ENCODE measurements at regions of chr6 and their contacts with region 1.

Region 1: GRCh38 chr6:154352898-154353585 is 3.6 kb downstream of the IPCEF1 start:
- DNase-seq: no peak
- H3K4me3 Mint-ChIP-seq: no peak overlapping the region
- H3K27ac Mint-ChIP-seq: no peak overlapping the region
- H3K4me1 Mint-ChIP-seq: peaks cover 20% of the 10 kb centered on the region
- H3K27me3 Mint-ChIP-seq: peaks cover 19% of the 10 kb centered on the region

Region 2: GRCh38 chr6:154229786-154230185 is 123.3 kb before region 1 on chr6:
- intact Hi-C with region 1: loop called (anchors 1 kb)
- DNase-seq: peak; percentile 49
- H3K4me3 Mint-ChIP-seq: peak overlapping the region; percentile 46
- H3K27ac Mint-ChIP-seq: peak overlapping the region; percentile 47
- H3K4me1 Mint-ChIP-seq: peaks cover 57% of the 10 kb centered on the region
- H3K27me3 Mint-ChIP-seq: no peaks in the 10 kb centered on the region

Region 3: GRCh38 chr6:154276810-154277628 is 76.0 kb before region 1 on chr6:
- intact Hi-C with region 1: loop called (anchors 1 kb)
- DNase-seq: no peak
- H3K4me3 Mint-ChIP-seq: peak overlapping the region; percentile 65
- H3K27ac Mint-ChIP-seq: peak overlapping the region; percentile 74
- H3K4me1 Mint-ChIP-seq: peaks cover 23% of the 10 kb centered on the region
- H3K27me3 Mint-ChIP-seq: peaks cover 18% of the 10 kb centered on the region

Region 4: DNA sequence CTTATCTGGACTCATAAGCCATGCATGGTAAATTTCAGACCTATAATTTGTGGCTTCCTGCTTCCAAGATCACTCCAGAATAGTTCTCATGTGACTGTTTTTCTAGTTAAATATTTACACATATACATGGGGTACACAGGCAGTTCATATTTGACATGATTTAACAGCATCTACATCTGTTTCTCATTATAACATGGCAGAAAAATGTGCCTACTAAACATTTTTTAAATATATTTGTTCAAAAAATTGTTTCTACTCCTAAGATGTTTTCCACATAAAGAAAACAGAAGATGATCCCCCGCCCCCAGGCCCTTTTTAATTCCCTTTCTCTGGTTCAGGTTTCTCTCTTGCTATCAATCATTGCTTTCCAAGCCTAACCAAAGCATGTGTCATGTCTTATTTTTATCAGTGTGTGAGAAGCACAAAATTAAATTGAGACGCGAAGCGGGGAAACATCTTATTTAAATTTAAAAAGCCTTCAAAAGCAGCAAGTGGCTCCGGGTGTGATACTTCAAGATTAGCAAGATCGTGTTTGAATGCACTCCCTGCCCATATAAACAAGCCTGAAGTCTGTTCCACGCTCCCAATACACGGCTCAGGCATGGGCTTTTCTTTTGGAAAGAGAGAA is 33.7 kb before region 1 on chr6:
- intact Hi-C with region 1: loop called (anchors 5 kb)
- DNase-seq: no peak
- H3K4me3 Mint-ChIP-seq: no peak overlapping the region
- H3K27ac Mint-ChIP-seq: no peak overlapping the region
- H3K4me1 Mint-ChIP-seq: peaks cover 5% of the 10 kb centered on the region
- H3K27me3 Mint-ChIP-seq: peaks cover 13% of the 10 kb centered on the region

Region 5: DNA sequence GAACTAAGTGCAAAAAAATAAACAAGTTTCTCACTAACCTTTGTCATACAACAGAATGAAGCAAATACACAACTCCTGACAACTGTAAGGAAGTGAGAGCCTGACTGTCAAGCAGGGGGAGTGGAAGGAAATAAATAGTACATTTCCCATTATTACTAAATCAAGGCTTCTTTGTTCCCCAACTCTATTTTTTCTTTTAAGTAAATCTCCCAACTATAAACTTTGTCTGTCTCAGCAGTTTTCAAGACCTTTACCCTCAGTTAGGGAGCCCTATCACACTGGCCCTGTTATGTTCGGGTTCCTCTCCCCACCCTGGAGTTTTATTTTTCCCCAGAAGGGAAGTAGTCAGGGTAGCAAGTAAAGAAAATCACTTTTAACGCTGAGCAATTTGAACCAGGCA is 27.7 kb after region 1 on chr6:
- intact Hi-C with region 1: no loop called
- DNase-seq: no peak
- H3K4me3 Mint-ChIP-seq: no peak overlapping the region
- H3K27ac Mint-ChIP-seq: no peak overlapping the region
- H3K4me1 Mint-ChIP-seq: no peaks in the 10 kb centered on the region
- H3K27me3 Mint-ChIP-seq: no peaks in the 10 kb centered on the region

Region 6: DNA sequence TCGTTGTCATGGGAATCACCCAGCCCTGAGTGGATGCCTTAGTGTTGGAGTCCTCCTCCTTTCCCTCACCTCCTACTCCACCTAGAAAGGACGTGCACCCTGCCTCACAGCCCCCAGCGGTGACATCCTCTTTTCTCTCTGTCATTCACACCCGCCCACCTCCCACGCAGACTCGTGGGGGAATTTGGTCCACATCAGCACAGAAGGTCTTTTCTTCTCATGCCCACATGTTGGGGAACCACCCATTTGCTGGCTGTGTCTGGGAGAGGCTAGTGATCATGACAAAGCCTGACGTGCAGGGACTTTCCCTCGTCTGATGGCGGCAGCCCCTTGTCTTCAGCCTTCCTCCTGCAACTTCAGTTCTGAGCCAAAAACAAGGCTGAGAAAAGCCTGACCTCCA is 253.4 kb after region 1 on chr6:
- intact Hi-C with region 1: loop called (anchors 1 kb)
- DNase-seq: peak; percentile 66
- H3K4me3 Mint-ChIP-seq: peak overlapping the region; percentile 65
- H3K27ac Mint-ChIP-seq: peak overlapping the region; percentile 86
- H3K4me1 Mint-ChIP-seq: peaks cover 24% of the 10 kb centered on the region
- H3K27me3 Mint-ChIP-seq: peaks cover 3% of the 10 kb centered on the region

Measured in activated T-helper 1 cell treated with anti-CD3 and anti-CD28 coated beads, Interleukin-12 subunit alpha, Interleukin-12 subunit beta, Interleukin-2, Interleukin-4 antibody, amounts not matched to agents 30 ng/mL and 10 ng/mL and 1 ng/mL, durations not matched to agents 14 hours and 24 hours and 36 hours (primary cell).